ENCODE measurements at regions of chr3 and their contacts with region 1.

Region 1: GRCh38 chr3:156674046-156674910 is at the start of gene TIPARP:
- DNase-seq: peak; percentile 100
- H3K4me3 Mint-ChIP-seq: peak within 1 kb of the TSS; percentile 91
- H3K27ac Mint-ChIP-seq: peak within 1 kb of the TSS; percentile 94
- H3K4me1 Mint-ChIP-seq: peaks cover 39% of the 10 kb centered on the region
- H3K27me3 Mint-ChIP-seq: no peaks in the 10 kb centered on the region
- total RNA-seq, gene TIPARP: 17.7 and 18.7 TPM in 2 replicates

Region 2: GRCh38 chr3:156483961-156484787 is 190.1 kb before region 1 on chr3:
- intact Hi-C with region 1: loop called (anchors 1 kb)
- DNase-seq: peak; percentile 87
- H3K4me3 Mint-ChIP-seq: peak overlapping the region; percentile 81
- H3K27ac Mint-ChIP-seq: peak overlapping the region; percentile 87
- H3K4me1 Mint-ChIP-seq: peaks cover 32% of the 10 kb centered on the region
- H3K27me3 Mint-ChIP-seq: peaks cover 8% of the 10 kb centered on the region

Region 3: DNA sequence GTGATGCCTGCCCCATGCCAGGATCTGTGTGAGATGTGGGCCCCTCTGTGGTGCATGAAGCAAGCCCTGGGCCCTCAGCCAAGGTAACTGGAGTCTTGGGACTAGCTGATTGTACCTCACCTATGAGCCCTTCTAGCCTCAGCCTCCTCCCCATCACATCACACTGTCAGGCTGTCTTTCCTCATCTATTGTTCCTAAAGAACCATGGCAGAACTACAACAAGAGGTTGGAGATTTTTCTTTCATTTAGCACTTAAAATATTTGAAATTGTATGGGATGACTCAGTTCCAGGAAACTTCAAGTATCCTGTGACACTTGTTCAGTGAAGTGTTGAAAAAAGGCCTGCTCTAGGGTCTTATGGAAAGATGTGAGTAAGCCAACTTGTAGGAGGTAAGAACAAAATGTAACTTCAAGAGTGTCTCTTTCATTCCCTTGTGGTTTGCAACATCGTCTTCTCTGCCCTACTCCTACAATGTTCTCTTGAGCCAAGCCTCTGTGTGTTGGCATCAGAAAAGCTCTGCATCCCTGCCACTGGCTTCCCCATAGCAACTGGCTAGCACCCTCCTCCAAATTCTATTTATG is 58.6 kb before region 1 on chr3:
- intact Hi-C with region 1: loop called (anchors 2 kb)
- DNase-seq: peak; percentile 54
- H3K4me3 Mint-ChIP-seq: no peak overlapping the region
- H3K27ac Mint-ChIP-seq: peak overlapping the region; percentile 67
- H3K4me1 Mint-ChIP-seq: peaks cover 20% of the 10 kb centered on the region
- H3K27me3 Mint-ChIP-seq: no peaks in the 10 kb centered on the region

Region 4: GRCh38 chr3:156691920-156692319 is 17.6 kb after region 1 on chr3:
- intact Hi-C with region 1: loop called (anchors 2 kb)
- DNase-seq: no peak
- H3K4me3 Mint-ChIP-seq: no peak overlapping the region
- H3K27ac Mint-ChIP-seq: no peak overlapping the region
- H3K4me1 Mint-ChIP-seq: peaks cover 59% of the 10 kb centered on the region
- H3K27me3 Mint-ChIP-seq: no peaks in the 10 kb centered on the region

Region 5: DNA sequence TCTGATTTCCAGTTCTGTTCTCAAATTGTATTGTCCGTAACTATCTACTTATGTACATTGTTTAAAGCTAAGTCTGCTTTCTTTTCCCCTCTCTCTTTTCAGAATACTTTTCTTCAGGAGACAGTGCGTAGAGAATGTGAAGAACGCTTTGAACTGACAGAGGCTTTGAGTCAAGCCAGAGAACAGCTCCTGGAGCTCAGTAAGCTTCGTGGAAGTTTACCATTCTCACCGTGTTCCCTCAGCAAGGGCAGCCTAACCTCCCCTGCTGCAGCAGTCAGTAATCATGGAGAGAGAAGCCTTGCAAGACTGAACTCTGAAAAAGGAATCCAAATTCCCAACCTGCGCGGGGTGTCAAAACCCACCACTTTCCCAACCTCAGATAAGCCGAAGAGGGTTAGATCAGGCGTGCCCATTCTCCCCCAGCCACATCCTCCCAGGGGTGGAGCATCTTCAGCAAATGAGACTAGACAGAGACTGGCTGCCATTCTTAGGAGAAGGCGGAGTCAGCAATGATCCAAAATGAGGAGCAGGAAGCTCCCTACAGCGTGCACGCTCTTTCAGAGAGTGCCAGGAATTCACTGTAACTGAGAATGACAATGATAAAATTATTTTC is 371.1 kb after region 1 on chr3:
- intact Hi-C with region 1: no loop called
- DNase-seq: no peak
- H3K4me3 Mint-ChIP-seq: no peak overlapping the region
- H3K27ac Mint-ChIP-seq: no peak overlapping the region
- H3K4me1 Mint-ChIP-seq: no peaks in the 10 kb centered on the region
- H3K27me3 Mint-ChIP-seq: peaks cover 40% of the 10 kb centered on the region

Region 6: DNA sequence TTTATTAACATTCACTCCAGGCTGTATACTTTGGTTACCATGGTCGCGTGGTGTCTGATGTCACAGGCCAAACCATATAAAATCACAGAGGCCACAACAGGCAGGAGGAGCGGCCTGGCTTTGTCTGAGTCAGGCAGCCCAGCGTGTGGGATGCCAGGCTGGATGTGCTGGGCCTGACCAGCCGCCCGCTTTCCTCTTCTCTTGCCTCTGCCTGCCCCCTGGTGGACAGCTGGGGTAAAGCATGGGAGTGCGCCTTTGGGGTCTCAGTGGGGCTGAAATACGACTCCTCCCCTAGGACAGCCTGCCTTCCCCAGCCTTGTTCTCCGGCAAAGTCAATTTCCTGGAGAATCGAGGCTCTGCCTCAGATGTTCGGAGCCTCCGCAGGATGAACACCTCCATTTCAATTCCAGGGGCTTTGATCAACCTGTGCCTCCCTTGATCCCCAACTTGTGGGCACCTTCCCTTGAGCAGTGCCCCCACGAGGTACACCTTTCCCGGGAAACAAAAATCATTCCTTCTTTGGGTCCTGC is 407.5 kb after region 1 on chr3:
- intact Hi-C with region 1: loop called (anchors 1 kb)
- DNase-seq: peak; percentile 95
- H3K4me3 Mint-ChIP-seq: no peak overlapping the region
- H3K27ac Mint-ChIP-seq: peak overlapping the region; percentile 18
- H3K4me1 Mint-ChIP-seq: peaks cover 45% of the 10 kb centered on the region
- H3K27me3 Mint-ChIP-seq: no peaks in the 10 kb centered on the region

Region 7: DNA sequence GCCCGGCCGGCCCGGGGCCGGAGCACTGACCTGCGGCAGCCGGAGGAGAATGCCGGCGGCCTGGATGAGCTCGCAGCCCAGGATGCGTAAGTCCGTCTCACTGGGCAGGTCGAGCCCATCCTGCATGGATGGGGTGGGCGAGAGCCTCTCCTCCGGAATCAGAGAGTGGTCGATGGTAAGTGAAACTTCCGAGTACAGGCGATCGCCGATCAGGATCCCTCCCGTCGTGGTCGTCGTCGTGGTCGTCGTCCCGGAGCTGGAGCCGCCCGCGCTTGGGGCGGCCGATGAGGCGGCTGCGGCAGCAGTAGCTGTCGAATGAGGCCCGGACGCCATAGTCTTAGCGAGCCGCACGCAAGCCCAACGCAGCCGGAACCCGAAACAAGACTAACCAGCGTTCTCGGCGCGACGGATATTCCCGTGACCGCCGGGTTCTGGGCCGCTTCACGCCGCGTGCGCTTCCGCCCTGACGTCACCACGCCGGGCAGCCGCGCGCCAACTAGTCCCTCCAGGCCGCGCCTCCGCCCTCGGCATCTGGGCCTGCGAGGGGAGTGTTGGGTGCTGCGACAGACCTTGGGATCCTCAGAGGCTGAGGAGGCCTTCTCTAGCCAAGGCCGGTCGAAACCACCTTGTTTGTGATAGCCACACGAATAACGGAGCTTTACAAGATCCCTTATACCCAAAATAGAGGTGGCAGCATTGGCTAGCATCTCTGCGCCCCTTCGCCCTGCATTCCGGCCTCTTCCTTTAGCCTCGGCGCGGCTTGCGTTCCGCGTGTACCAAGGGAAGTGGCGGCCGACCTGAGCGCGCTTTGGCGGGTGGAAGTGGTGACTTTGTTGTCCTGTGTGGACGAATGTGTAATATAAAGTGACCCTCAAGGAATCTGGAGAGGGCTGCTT is 485.7 kb after region 1 on chr3 and contains the start of gene CCNL1:
- intact Hi-C with region 1: loop called (anchors 1 kb)
- DNase-seq: peak; percentile 99
- H3K4me3 Mint-ChIP-seq: peak within 1 kb of the TSS; percentile 94
- H3K27ac Mint-ChIP-seq: peak within 1 kb of the TSS; percentile 99
- H3K4me1 Mint-ChIP-seq: peaks cover 44% of the 10 kb centered on the region
- H3K27me3 Mint-ChIP-seq: no peaks in the 10 kb centered on the region
- total RNA-seq, gene CCNL1: 171 and 172 TPM in 2 replicates